ENCODE measurements at regions of chr6 and their contacts with region 1.

Region 1: DNA sequence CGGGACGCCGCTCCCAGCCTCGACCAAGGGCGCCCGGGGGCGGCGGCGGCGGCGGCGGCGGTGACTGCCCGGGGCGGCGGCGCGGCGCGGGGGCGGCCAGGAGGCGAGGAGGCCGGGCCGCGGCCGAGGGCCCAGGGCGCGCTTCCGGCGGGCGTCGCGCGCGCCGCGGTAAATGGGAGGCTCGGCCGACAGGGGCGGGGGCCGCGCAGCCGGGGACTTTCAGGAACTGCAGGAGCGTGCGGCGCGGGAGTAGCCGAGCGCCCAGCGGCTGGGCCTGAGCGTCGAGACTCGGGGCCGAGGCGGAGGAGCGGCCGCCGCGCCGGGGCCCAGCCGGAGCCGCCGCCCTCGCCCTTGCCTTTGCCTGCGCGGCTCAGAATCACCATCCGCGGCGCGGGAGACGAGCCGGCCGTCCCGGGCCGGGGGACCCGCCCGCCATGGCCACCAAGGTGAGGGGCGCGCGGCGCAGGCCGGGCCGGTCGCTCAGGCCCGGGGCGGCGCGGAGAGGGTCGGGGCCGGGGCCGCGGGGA is at the start of gene SNX9:
- DNase-seq: peak; percentile 45 to 83 (median 70)
- H3K4me3 ChIP-seq: peak within 1 kb of the TSS; percentile 57 to 98 (median 90)
- H3K27ac ChIP-seq: peak within 1 kb of the TSS; percentile 90 to 99 (median 96)
- H3K27me3 ChIP-seq: no peaks in the 10 kb centered on the region
- CTCF ChIP-seq: peak in 2 of 56 donors; percentile 6 to 14
- total RNA-seq, gene SNX9: 21.2 to 46.1 (median 28.8) TPM

Region 2: GRCh38 chr6:157764178-157765033 is 58.7 kb before region 1 on chr6:
- intact Hi-C with region 1: loop called (anchors 5 kb)
- DNase-seq: peak; percentile 32 to 93 (median 82)
- H3K4me3 ChIP-seq: peak overlapping the region in 4 of 59 donors; percentile 0 to 22 (median 8)
- H3K27ac ChIP-seq: peak overlapping the region in 57 of 59 donors; percentile 1 to 90 (median 72)
- H3K27me3 ChIP-seq: no peaks in the 10 kb centered on the region
- CTCF ChIP-seq: peak in 1 of 56 donors; percentile 11

Region 3: GRCh38 chr6:157861814-157862213 is 38.8 kb after region 1 on chr6:
- intact Hi-C with region 1: loop called in 1 of 2 experiments (anchors 5 kb)
- DNase-seq: peak in 1 of 10 donors; percentile 25
- H3K4me3 ChIP-seq: no peak overlapping the region
- H3K27ac ChIP-seq: peak overlapping the region in 22 of 59 donors; percentile 0 to 65 (median 18)
- H3K27me3 ChIP-seq: no peaks in the 10 kb centered on the region
- CTCF ChIP-seq: no peak

Region 4: GRCh38 chr6:157873735-157874344 is 50.8 kb after region 1 on chr6:
- intact Hi-C with region 1: loop called in 1 of 2 experiments (anchors 10 kb)
- DNase-seq: peak; percentile 35 to 80 (median 70)
- H3K4me3 ChIP-seq: no peak overlapping the region
- H3K27ac ChIP-seq: peak overlapping the region in 16 of 59 donors; percentile 1 to 55 (median 26)
- H3K27me3 ChIP-seq: no peaks in the 10 kb centered on the region
- CTCF ChIP-seq: peak; percentile 45 to 88 (median 78)

Region 5: DNA sequence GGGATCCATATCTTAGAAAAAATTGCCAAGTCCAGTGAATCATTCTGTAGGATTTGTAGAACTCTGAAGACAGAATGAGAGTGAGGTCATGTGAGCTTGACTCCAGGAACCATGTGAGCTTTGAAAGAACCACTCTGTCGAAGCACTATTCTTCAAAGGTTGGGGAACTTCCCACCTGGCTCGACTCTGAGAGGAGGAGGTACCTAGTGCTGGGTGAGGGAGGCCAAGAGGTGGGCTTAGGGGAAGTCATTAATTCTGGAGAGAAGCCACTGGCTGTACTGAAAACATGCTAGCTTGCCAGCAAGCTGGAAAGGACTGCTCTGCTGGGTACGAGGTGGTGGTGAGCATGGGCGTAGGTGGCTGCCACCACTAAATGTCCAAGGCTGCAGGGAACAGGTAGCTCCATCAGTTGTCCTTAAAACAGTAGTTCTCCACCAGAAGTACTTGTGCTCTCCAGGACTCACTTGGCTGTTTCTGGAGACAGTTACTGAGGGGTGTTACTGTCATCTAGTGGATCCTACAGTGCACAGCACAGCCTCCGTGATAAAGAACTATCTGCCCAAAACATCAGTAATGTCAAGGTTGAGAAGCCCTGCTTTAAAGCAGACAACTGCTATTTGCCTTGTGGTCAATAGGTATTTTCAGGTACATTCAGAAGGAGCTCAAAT is 123.9 kb after region 1 on chr6:
- intact Hi-C with region 1: loop called in 1 of 2 experiments (anchors 5 kb)
- DNase-seq: peak in 1 of 10 donors; percentile 58
- H3K4me3 ChIP-seq: no peak overlapping the region
- H3K27ac ChIP-seq: peak overlapping the region in 48 of 59 donors; percentile 9 to 100 (median 61)
- H3K27me3 ChIP-seq: no peaks in the 10 kb centered on the region
- CTCF ChIP-seq: peak; percentile 22 to 88 (median 71)

Region 6: DNA sequence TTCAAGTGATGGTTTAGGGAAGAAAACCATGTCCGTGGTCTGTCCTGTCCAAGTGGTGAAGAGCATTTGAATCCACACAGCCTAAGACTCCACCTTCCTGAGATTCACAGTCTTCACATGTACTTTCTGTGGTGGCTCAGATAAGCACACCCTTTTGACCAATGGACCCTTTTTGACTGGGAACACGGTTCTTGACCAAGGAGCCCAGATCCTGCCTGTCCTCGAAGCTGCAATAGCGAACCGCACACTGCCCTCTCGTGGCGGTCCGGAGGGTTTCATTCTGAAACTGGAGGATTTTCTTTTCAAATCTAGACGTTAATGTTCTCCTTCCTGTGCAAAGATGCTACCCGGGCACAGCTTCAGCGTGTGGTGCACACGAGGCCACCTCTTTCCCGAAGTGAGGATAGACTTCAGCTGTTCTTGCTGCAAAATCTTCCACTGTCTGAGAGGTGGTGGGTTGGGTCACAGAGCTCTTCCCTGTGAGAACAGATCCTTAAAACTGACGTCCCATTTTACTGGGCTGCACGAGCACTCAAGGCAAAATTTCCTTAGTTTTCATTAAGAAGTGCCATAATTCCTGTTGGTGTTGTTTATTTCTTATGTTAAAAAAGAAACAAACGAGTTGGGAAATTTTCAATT is 249.1 kb after region 1 on chr6:
- intact Hi-C with region 1: loop called in 1 of 2 experiments (anchors 10 kb)
- DNase-seq: peak; percentile 70 to 91 (median 78)
- H3K4me3 ChIP-seq: peak overlapping the region in 1 of 59 donors; percentile 16
- H3K27ac ChIP-seq: peak overlapping the region in 58 of 59 donors; percentile 2 to 90 (median 80)
- H3K27me3 ChIP-seq: no peaks in the 10 kb centered on the region
- CTCF ChIP-seq: peak; percentile 69 to 97 (median 90)